ENCODE measurements at regions of chr2 and their contacts with region 1.

Region 1: DNA sequence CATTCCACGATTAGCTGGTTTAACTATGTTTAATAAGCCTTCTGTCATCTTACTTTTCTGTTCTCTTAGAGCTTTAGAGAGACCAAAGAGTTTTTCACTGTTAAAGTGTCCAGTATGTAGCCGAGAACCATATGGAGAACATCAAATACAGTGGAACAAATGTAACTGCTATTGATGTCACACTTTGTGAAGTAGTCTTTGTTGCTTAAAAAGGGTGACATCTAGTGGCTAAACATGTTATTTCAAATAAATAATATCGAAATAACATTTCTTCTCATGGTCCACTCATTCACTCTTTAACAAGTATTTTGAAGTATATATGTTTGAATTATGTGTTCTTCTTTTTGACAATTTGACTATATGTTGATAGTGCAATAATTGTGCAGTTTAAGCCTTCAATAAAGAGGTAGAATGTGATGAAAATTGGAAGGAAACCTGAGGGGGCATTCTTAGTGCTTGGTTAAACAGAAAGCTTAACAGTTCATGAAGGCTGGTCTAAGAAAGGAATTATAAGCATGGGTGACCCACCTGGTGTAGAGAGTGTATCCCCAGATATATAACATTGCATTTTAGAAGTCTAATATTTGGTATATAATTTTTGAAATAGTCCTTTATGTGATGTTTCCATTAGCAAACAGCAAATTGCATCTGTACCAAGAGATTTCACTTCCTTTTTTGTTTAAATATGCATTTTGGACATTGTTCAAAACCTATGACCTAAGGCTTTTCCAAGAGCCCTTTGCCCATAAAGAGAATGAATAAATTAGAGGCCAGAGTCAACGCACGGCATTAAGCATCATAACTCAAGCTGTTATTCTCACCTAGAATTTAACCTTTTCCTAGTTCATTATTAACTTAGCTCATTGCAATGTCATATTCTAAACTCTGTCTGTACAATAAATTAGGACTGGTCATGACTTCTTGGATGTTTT is 112.1 kb downstream of the KYNU start:
- DNase-seq: peak; percentile 7
- H3K4me3 ChIP-seq: no peak overlapping the region
- H3K27ac ChIP-seq: no peak overlapping the region
- H3K4me1 ChIP-seq: no peaks in the 10 kb centered on the region
- H3K27me3 ChIP-seq: peaks cover 5% of the 10 kb centered on the region
- CTCF ChIP-seq: peak; percentile 45 to 49

Region 2: GRCh38 chr2:142682528-142682927 is 307.0 kb before region 1 on chr2:
- CTCF ChIA-PET with region 1: no interaction called
- dilution Hi-C with region 1: no loop called
- in situ Hi-C with region 1: loop called (anchors 5 to 10 kb)
- intact Hi-C with region 1: loop called (anchors 2 kb)
- DNase-seq: peak; percentile 17
- H3K4me3 ChIP-seq: no peak overlapping the region
- H3K27ac ChIP-seq: no peak overlapping the region
- H3K4me1 ChIP-seq: no peaks in the 10 kb centered on the region
- H3K27me3 ChIP-seq: no peaks in the 10 kb centered on the region
- CTCF ChIP-seq: peak; percentile 14 to 45

Region 3: DNA sequence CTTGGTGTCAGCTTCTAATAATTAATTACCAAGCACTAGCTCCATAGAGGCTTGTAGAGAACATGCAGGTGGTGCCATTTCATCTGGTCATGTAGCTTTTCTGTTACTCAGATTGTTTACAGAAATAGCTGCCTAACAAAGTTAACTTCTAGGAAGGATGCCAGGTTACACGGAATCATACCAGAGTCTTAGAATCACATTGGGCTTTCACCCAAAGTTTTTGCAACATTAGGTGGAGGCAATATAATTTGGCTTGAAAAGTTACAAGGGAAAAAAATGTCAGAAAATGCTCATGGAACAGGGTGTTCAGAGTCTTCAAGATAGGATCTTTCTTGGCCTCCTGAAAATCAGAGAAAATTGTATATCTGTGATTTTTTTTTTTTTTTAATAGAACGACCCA is 275.3 kb after region 1 on chr2:
- CTCF ChIA-PET with region 1: no interaction called
- dilution Hi-C with region 1: no loop called
- in situ Hi-C with region 1: no loop called
- intact Hi-C with region 1: no loop called
- DNase-seq: no peak
- H3K4me3 ChIP-seq: no peak overlapping the region
- H3K27ac ChIP-seq: no peak overlapping the region
- H3K4me1 ChIP-seq: no peaks in the 10 kb centered on the region
- H3K27me3 ChIP-seq: no peaks in the 10 kb centered on the region
- CTCF ChIP-seq: no peak